Natural killer cell (primary cell): ENCODE measurements at regions of chr1 and their contacts with region 1.

Region 1: GRCh38 chr1:27097484-27097917 is 57.4 kb downstream of the SLC9A1 start:
- DNase-seq: peak; percentile 66 to 85
- ATAC-seq: peak; percentile 83 to 89 (median 86)
- H3K4me3 ChIP-seq: no peak overlapping the region
- H3K4me3 Mint-ChIP-seq: no peak overlapping the region
- H3K27ac ChIP-seq: no peak overlapping the region
- H3K27ac Mint-ChIP-seq: no peak overlapping the region
- H3K4me1 ChIP-seq: peaks cover 29% of the 10 kb centered on the region
- H3K4me1 Mint-ChIP-seq: peaks cover 14 to 25% of the 10 kb centered on the region in 2 donors
- H3K27me3 ChIP-seq: no peaks in the 10 kb centered on the region
- H3K27me3 Mint-ChIP-seq: no peaks in the 10 kb centered on the region
- CTCF ChIP-seq: peak; percentile 93

Region 2: GRCh38 chr1:27044613-27045151 is 52.8 kb before region 1 on chr1:
- intact Hi-C with region 1: loop called (anchors 1 kb)
- DNase-seq: peak; percentile 88 to 92
- ATAC-seq: peak; percentile 88 to 98 (median 94)
- H3K4me3 ChIP-seq: no peak overlapping the region
- H3K4me3 Mint-ChIP-seq: peak overlapping the region; percentile 45
- H3K27ac ChIP-seq: no peak overlapping the region
- H3K27ac Mint-ChIP-seq: no peak overlapping the region
- H3K4me1 ChIP-seq: peaks cover 14% of the 10 kb centered on the region
- H3K4me1 Mint-ChIP-seq: peaks cover 10 to 11% of the 10 kb centered on the region in 2 donors
- H3K27me3 ChIP-seq: no peaks in the 10 kb centered on the region
- H3K27me3 Mint-ChIP-seq: peaks cover 3 to 4% of the 10 kb centered on the region in 2 donors
- CTCF ChIP-seq: peak; percentile 99

Region 3: DNA sequence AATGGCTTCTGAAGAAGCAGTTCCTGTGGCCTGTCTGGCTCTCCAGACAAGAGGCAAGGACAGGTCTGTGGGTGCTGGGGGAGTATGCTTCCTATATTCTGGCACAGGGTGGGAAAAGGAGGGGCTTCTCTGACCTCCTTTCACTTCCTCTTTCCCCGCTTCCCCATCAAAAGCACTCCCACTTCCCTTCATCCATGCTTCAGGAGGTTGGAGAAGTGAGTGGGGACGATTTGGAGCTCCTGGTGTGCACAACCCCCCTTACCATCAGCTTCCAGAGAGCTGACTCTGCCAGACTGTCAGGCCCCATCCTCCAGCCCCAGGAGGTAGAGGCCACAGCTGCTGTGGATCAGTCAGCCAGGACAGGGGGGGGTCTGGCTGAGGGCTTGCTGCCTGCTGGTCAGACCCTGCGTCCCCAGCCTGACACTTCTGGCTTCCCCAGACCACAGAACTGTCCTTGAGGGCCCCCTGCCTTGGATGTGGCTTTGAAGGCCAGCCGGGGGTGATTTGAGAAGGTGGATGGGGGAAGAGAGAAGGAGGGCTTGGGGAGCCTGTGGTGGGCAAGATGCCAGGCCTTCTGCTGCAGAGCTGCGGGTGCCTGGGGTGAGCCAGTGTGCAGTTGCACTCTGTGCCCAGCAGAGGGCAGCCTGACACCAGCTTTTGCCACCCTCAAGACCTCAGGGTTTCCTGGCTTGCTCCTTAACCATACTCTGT is 203.0 kb after region 1 on chr1:
- intact Hi-C with region 1: no loop called
- DNase-seq: peak; percentile 77 to 94
- ATAC-seq: peak; percentile 91 to 98 (median 91)
- H3K4me3 ChIP-seq: no peak overlapping the region
- H3K4me3 Mint-ChIP-seq: no peak overlapping the region
- H3K27ac ChIP-seq: no peak overlapping the region
- H3K27ac Mint-ChIP-seq: no peak overlapping the region
- H3K4me1 ChIP-seq: peaks cover 18% of the 10 kb centered on the region
- H3K4me1 Mint-ChIP-seq: peaks cover 6 to 7% of the 10 kb centered on the region in 2 donors
- H3K27me3 ChIP-seq: no peaks in the 10 kb centered on the region
- H3K27me3 Mint-ChIP-seq: no peaks in the 10 kb centered on the region
- CTCF ChIP-seq: peak; percentile 91